ENCODE measurements at regions of chr12 and their contacts with region 1.

Region 1: GRCh38 chr12:95918194-95918993 is 24.0 kb downstream of the CCDC38 start:
- DNase-seq: peak in 13 of 14 experiments; percentile 5 to 79 (median 22)
- ATAC-seq: peak; percentile 97
- H3K4me3 ChIP-seq: no peak overlapping the region
- H3K4me3 Mint-ChIP-seq: no peak overlapping the region
- H3K27ac ChIP-seq: no peak overlapping the region
- H3K27ac Mint-ChIP-seq: no peak overlapping the region
- H3K4me1 ChIP-seq: no peaks in the 10 kb centered on the region
- H3K4me1 Mint-ChIP-seq: no peaks in the 10 kb centered on the region
- H3K27me3 ChIP-seq: no peaks in the 10 kb centered on the region
- H3K27me3 Mint-ChIP-seq: peaks cover under 1% of the 10 kb centered on the region
- CTCF ChIP-seq: peak; percentile 86

Region 2: GRCh38 chr12:95959107-95959506 is 40.7 kb after region 1 on chr12:
- CTCF ChIA-PET with region 1: no interaction called
- POLR2A ChIA-PET with region 1: no interaction called
- intact Hi-C with region 1: loop called in 1 of 2 experiments (anchors 2 kb)
- DNase-seq: peak in 1 of 14 experiments; percentile 17
- ATAC-seq: no peak
- H3K4me3 ChIP-seq: no peak overlapping the region
- H3K4me3 Mint-ChIP-seq: no peak overlapping the region
- H3K27ac ChIP-seq: no peak overlapping the region
- H3K27ac Mint-ChIP-seq: no peak overlapping the region
- H3K4me1 ChIP-seq: no peaks in the 10 kb centered on the region
- H3K4me1 Mint-ChIP-seq: no peaks in the 10 kb centered on the region
- H3K27me3 ChIP-seq: no peaks in the 10 kb centered on the region
- H3K27me3 Mint-ChIP-seq: no peaks in the 10 kb centered on the region
- CTCF ChIP-seq: no peak

Region 3: GRCh38 chr12:95998611-95999286 is 80.4 kb after region 1 on chr12:
- CTCF ChIA-PET with region 1: interaction called, 24 read pairs
- POLR2A ChIA-PET with region 1: interaction called, 4 read pairs
- intact Hi-C with region 1: loop called in 1 of 2 experiments (anchors 1 kb)
- DNase-seq: peak in 13 of 14 experiments; percentile 5 to 78 (median 20)
- ATAC-seq: peak; percentile 99
- H3K4me3 ChIP-seq: no peak overlapping the region
- H3K4me3 Mint-ChIP-seq: no peak overlapping the region
- H3K27ac ChIP-seq: no peak overlapping the region
- H3K27ac Mint-ChIP-seq: no peak overlapping the region
- H3K4me1 ChIP-seq: peaks cover 4% of the 10 kb centered on the region
- H3K4me1 Mint-ChIP-seq: no peaks in the 10 kb centered on the region
- H3K27me3 ChIP-seq: no peaks in the 10 kb centered on the region
- H3K27me3 Mint-ChIP-seq: no peaks in the 10 kb centered on the region
- CTCF ChIP-seq: peak; percentile 67